ENCODE measurements at regions of chr22 and their contacts with region 1.

Region 1: GRCh38 chr22:41217553-41218157 is 12.5 kb downstream of the L3MBTL2 start:
- DNase-seq: peak; percentile 44
- H3K4me3 Mint-ChIP-seq: peak overlapping the region; percentile 59
- H3K27ac Mint-ChIP-seq: peak overlapping the region; percentile 75
- H3K4me1 Mint-ChIP-seq: peaks cover 28% of the 10 kb centered on the region
- H3K27me3 Mint-ChIP-seq: no peaks in the 10 kb centered on the region

Region 2: GRCh38 chr22:41197038-41197972 is 20.4 kb before region 1 on chr22:
- intact Hi-C with region 1: loop called (anchors 2 kb)
- DNase-seq: peak; percentile 78
- H3K4me3 Mint-ChIP-seq: peak overlapping the region; percentile 88
- H3K27ac Mint-ChIP-seq: no peak overlapping the region
- H3K4me1 Mint-ChIP-seq: peaks cover 14% of the 10 kb centered on the region
- H3K27me3 Mint-ChIP-seq: peaks cover 35% of the 10 kb centered on the region

Region 3: DNA sequence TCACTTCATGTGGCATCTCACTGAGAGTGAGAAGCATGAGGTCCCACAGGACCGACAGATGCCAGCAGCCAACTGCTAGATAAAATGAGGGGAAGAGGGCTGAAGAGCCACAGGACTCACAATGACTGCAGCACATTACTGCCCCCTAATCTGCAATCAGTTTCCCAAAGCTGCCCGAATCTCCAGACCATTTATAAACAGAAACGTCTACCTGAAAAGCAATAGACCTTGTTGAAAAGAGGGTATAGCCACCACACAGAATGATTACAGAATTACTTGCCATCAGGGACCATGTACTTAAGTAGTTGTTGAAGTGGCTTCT is 151.7 kb after region 1 on chr22:
- intact Hi-C with region 1: no loop called
- DNase-seq: no peak
- H3K4me3 Mint-ChIP-seq: no peak overlapping the region
- H3K27ac Mint-ChIP-seq: no peak overlapping the region
- H3K4me1 Mint-ChIP-seq: no peaks in the 10 kb centered on the region
- H3K27me3 Mint-ChIP-seq: peaks cover 6% of the 10 kb centered on the region

Measured in activated T-helper 1 cell treated with anti-CD3 and anti-CD28 coated beads, Interleukin-12 subunit alpha, Interleukin-12 subunit beta, Interleukin-2, Interleukin-4 antibody, amounts not matched to agents 30 ng/mL and 10 ng/mL and 1 ng/mL, durations not matched to agents 14 hours and 24 hours and 36 hours (primary cell).